A549 (cell line): ENCODE measurements at regions of chr9 and their contacts with region 1.

Region 1: DNA sequence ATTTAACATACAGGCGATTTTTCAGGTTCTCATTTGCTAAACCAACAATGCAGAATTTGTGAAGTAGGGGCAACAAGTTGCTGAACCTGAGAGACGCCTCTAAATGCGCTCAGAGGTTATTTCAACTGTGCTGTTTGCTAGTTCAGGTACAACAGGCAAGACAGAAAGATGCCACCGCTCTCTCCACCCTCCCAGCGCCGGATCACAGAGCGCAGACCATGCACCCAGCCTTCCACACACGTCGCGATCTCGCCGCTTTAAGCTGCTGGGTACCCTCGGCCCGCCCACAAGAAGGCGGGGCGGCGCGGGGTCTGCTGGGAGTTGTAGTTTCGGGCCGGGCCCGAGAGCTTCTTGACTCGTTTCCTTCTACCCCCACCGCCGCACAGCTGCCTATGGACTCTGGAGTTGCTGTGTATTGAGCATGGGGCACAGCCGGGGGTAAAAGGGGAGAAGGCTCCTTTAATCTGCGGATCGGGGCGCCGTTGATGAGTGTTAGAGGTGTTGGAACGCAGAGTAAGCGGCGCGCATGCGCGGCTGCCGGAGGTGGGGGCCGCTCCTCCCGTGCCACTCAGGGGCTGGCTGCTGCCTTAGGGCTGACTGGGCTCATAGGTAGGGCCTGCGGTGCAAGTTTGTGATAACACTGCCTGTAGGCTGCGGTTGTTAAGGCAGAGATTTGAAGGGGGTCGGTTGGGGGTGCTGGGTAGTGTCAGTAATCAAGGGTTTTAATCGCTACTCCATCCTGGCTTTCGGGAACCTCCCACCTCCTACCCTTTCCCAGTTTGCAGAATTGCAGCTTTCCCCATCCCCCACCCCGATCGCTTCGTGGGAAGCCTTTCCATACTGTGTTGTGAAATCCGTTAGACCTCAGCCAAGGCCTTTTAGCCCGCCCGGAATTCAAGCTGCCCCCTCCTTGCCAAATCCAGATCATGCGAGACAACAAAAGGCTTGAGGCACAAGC is 40.3 kb upstream of the ABCA1 start:
- DNase-seq: peak; percentile 76 to 86
- ATAC-seq: peak; percentile 98 to 99
- H3K4me3 ChIP-seq: peak overlapping the region; percentile 56
- H3K27ac ChIP-seq: peak overlapping the region; percentile 94 to 98
- H3K4me1 ChIP-seq: peaks cover 6% of the 10 kb centered on the region; the same call in 2 of the 3 replicates
- CTCF ChIP-seq: no peak
- EP300 ChIP-seq: no peak; a peak in 1 of 5 replicates
- POLR2A ChIP-seq: peak; percentile 89
- RAD21 ChIP-seq: peak in 1 of 2 experiments; percentile 27; a peak in 2 of 5 replicates

Region 2: GRCh38 chr9:104984121-104984520 is 15.8 kb after region 1 on chr9:
- CTCF ChIA-PET with region 1: interaction called, 4 read pairs
- POLR2A ChIA-PET with region 1: interaction called, 25 read pairs
- DNase-seq: no peak
- ATAC-seq: no peak
- H3K4me3 ChIP-seq: no peak overlapping the region
- H3K27ac ChIP-seq: no peak overlapping the region
- H3K4me1 ChIP-seq: peaks cover 3% of the 10 kb centered on the region; the same call in 1 of the 3 replicates
- CTCF ChIP-seq: no peak
- EP300 ChIP-seq: no peak
- POLR2A ChIP-seq: no peak
- RAD21 ChIP-seq: no peak

Region 3: GRCh38 chr9:104991144-104991953 is 23.0 kb after region 1 on chr9:
- CTCF ChIA-PET with region 1: interaction called, 4 read pairs
- POLR2A ChIA-PET with region 1: interaction called, 33 read pairs
- DNase-seq: peak; percentile 54 to 87
- ATAC-seq: peak; percentile 84 to 89
- H3K4me3 ChIP-seq: peak overlapping the region; percentile 61
- H3K27ac ChIP-seq: peak overlapping the region; percentile 92 to 96
- H3K4me1 ChIP-seq: peaks cover 41% of the 10 kb centered on the region
- CTCF ChIP-seq: no peak
- EP300 ChIP-seq: no peak
- POLR2A ChIP-seq: peak; percentile 20
- RAD21 ChIP-seq: 0 out of 5 replicates have a peak, but pooled peaks have one; percentile 3 to 25

Region 4: GRCh38 chr9:105064315-105065097 is 96.2 kb after region 1 on chr9:
- CTCF ChIA-PET with region 1: no interaction called
- POLR2A ChIA-PET with region 1: interaction called, 23 read pairs
- DNase-seq: peak; percentile 89 to 96
- ATAC-seq: peak; percentile 90 to 95
- H3K4me3 ChIP-seq: peak overlapping the region; percentile 12; the same call in 1 of the 3 replicates
- H3K27ac ChIP-seq: peak overlapping the region; percentile 88 to 93
- H3K4me1 ChIP-seq: peaks cover 41% of the 10 kb centered on the region
- CTCF ChIP-seq: no peak
- EP300 ChIP-seq: peak; percentile 81 to 87; a peak in 4 of 5 replicates
- POLR2A ChIP-seq: no peak
- RAD21 ChIP-seq: peak in 1 of 2 experiments; percentile 66; a peak in 3 of 5 replicates

Region 5: GRCh38 chr9:105244003-105244733 is 275.9 kb after region 1 on chr9 and contains the start of gene SLC44A1:
- CTCF ChIA-PET with region 1: no interaction called
- POLR2A ChIA-PET with region 1: interaction called, 13 read pairs
- DNase-seq: peak; percentile 69 to 96
- ATAC-seq: peak; percentile 94 to 98
- H3K4me3 ChIP-seq: peak within 1 kb of the TSS; percentile 97
- H3K27ac ChIP-seq: peak within 1 kb of the TSS; percentile 93 to 95
- H3K4me1 ChIP-seq: peaks cover 35% of the 10 kb centered on the region
- CTCF ChIP-seq: no peak; the same call in 2 of the 3 replicates
- EP300 ChIP-seq: 0 out of 5 replicates have a peak, but pooled peaks of 1 of the 2 experiments have one; percentile 31
- POLR2A ChIP-seq: peak; percentile 56
- RAD21 ChIP-seq: peak; percentile 23 to 49; a peak in 2 of 5 replicates
- polyA plus RNA-seq, gene SLC44A1: 19.6 and 38.8 TPM in 2 replicates